A673 (cell line): ENCODE measurements at regions of chr4 and their contacts with region 1.

Region 1: GRCh38 chr4:183335369-183335940 is 13.2 kb upstream of the CLDN24 start:
- DNase-seq: peak; percentile 83
- H3K4me3 ChIP-seq: no peak overlapping the region
- H3K27ac ChIP-seq: peak overlapping the region; percentile 45
- H3K4me1 ChIP-seq: peaks cover 3% of the 10 kb centered on the region
- H3K27me3 ChIP-seq: no peaks in the 10 kb centered on the region
- CTCF ChIP-seq: no peak

Region 2: DNA sequence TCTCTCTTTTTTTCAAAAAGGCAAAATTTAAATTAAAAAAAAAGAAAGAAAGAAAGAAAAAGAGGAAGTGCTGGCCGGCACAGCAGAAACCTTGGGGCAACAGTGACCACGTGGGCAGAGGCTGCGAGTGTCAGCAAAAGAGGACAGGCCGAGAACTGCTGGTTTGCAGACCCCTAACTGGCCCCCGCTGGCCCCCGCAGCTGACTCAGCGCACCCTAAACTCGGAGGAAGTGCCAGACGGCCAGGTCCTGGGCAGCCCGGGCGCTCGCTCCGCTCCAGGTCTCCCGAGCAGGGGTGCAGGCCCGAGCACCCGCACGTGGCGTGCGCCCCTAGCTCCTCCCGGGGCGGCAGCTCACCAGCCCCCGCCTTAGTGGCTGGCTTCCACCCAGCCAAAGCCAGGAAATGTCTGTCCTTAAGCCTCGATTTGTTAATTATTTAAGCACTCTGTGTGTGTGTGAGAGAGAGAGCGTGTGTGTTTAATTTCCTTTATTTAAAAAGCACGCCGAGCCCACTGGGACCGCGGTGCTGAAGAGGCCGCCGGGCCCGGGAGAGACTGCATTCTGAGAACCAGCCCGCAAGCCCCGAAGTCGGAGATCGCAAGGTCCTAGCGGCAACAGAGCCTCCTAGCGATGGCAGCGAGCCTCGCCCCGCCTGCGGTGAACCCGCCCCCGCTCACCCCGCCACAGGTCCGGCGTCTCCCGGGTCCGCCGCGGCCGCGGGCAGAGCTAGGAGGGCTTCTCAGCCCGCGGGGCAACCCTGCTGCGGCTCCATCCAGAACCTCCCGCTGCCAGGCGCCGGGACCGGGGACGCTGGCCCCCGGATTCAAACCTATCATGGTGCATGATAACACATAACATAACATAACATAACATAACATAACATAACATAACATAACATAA is 63.0 kb after region 1 on chr4:
- CTCF ChIA-PET with region 1: no interaction called
- POLR2A ChIA-PET with region 1: no interaction called
- intact Hi-C with region 1: loop called (anchors 5 kb)
- DNase-seq: peak; percentile 86
- H3K4me3 ChIP-seq: peak overlapping the region; percentile 20
- H3K27ac ChIP-seq: peak overlapping the region; percentile 88
- H3K4me1 ChIP-seq: peaks cover 43% of the 10 kb centered on the region
- H3K27me3 ChIP-seq: no peaks in the 10 kb centered on the region
- CTCF ChIP-seq: peak; percentile 65

Region 3: DNA sequence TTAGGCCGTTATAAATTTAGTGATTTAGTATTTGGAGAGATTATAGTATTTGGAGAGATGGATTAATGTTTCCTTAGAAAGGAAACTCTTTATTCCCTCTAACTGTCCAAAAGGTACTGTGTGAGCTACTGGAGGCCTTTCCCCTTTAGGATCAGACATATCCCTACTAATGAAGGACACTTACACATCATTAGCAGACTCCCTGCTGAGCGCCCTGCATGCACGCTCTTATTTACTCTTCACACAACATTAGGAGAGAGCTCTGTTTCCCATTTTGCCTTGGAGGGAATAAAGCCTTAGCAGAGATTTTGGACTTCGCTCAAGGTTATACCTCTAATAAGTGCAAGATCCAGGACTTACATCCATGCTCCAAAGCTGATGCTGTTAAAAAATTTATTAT is 551.9 kb after region 1 on chr4:
- CTCF ChIA-PET with region 1: no interaction called
- POLR2A ChIA-PET with region 1: no interaction called
- intact Hi-C with region 1: no loop called
- DNase-seq: no peak
- H3K4me3 ChIP-seq: no peak overlapping the region
- H3K27ac ChIP-seq: no peak overlapping the region
- H3K4me1 ChIP-seq: no peaks in the 10 kb centered on the region
- H3K27me3 ChIP-seq: no peaks in the 10 kb centered on the region
- CTCF ChIP-seq: no peak